Dorsolateral prefrontal cortex (tissue), 120 donors: ENCODE measurements at regions of chr13 and their contacts with region 1.

Region 1: DNA sequence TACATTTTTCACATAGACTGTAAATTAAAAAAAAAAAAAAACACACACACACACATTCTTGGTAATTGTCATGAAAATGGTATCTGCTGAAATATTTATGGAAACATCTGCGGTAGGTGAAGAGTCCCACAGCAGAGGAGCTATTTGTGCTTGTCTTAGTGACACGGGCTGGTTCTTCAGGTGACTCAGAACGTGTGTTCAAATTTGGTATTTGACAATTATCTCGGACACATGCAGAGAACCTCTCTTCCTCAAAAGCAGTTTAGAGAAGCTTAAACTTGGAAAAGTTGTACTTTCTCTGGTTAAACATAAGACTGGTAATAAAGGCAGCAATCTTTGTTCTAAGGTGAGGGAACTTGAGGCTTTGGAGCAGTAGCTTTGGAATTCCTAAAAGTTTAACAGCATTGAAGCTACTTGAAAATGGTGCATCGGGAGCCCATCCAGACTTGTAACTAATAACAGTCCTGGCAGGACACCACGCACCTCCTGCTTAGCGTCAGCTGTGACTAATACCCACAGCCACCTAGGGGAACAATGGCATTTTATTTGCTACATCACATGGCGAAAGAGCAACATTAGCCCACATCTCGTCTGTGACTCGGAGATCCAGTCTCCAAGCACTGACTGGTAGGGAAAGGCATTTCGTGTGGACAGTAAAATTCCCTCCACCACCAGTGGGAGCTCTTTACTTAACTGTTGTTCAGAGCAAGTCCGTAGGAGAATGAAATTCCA is 1505.1 kb upstream of the SLC10A2 start:
- DNase-seq: peak in 9 of 10 donors; percentile 52 to 93 (median 70)
- H3K4me3 ChIP-seq: peak overlapping the region in 48 of 59 donors; percentile 4 to 55 (median 32)
- H3K27ac ChIP-seq: peak overlapping the region in 12 of 59 donors; percentile 2 to 74 (median 40)
- H3K27me3 ChIP-seq: no peaks in the 10 kb centered on the region
- CTCF ChIP-seq: peak; percentile 54 to 87 (median 78)

Region 2: DNA sequence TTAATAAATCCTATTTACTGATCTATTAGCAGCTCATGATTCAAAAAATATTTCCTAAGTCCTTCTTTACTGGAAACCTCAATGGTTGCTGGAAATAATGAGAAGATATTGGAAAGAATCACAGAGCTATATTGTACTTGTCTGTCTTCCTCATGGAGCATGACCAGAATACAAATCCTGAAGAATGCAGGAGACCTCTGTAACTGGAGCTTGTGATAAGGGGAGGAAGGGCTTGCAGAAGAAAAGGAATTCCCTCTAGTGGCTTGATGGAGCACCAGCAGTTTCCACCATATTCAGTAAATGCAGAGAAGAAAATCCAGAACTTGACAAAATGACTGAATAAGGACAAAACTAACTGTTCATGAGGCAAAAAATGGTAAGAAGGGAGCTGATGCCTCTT is 631.0 kb after region 1 on chr13:
- intact Hi-C with region 1: loop called in 1 of 2 experiments (anchors 10 kb)
- DNase-seq: no peak
- H3K4me3 ChIP-seq: no peak overlapping the region
- H3K27ac ChIP-seq: no peak overlapping the region
- H3K27me3 ChIP-seq: no peaks in the 10 kb centered on the region
- CTCF ChIP-seq: peak; percentile 26 to 83 (median 64)